Psoas muscle (tissue), 8 donors: ENCODE measurements at regions of chr18 and their contacts with region 1.

Region 1: DNA sequence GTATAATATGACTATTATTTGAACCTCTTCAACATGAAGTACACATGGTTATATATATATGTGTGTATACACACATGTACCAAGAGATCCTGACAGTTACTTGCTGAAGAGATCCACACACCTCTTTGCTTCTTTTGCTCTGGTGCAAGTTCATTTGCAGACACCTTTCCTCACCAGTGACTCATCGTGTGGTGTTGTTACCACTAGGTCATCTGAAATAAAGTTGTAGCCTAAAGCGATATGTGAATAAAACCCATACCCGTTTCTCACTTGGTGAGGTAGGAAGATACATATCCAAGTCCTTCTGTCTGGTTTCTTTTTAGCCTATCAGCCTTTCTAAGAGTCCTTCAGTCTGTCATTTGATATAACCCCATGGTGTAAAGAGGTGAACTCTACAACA is 379.5 kb upstream of the RAB12 start:
- DNase-seq: no peak
- ATAC-seq: no peak
- H3K4me3 ChIP-seq: no peak overlapping the region
- H3K27ac ChIP-seq: no peak overlapping the region
- H3K4me1 ChIP-seq: no peaks in the 10 kb centered on the region
- H3K27me3 ChIP-seq: no peaks in the 10 kb centered on the region
- CTCF ChIP-seq: no peak

Region 2: GRCh38 chr18:8097927-8098326 is 131.8 kb before region 1 on chr18:
- intact Hi-C with region 1: no loop called
- DNase-seq: no peak
- ATAC-seq: no peak
- H3K4me3 ChIP-seq: no peak overlapping the region
- H3K27ac ChIP-seq: no peak overlapping the region
- H3K4me1 ChIP-seq: no peaks in the 10 kb centered on the region
- H3K27me3 ChIP-seq: no peaks in the 10 kb centered on the region
- CTCF ChIP-seq: no peak

Region 3: GRCh38 chr18:8217051-8217564 is 12.7 kb before region 1 on chr18:
- intact Hi-C with region 1: loop called in 1 of 2 experiments (anchors 1 kb)
- DNase-seq: no peak
- ATAC-seq: no peak
- H3K4me3 ChIP-seq: no peak overlapping the region
- H3K27ac ChIP-seq: no peak overlapping the region
- H3K4me1 ChIP-seq: no peaks in the 10 kb centered on the region
- H3K27me3 ChIP-seq: no peaks in the 10 kb centered on the region
- CTCF ChIP-seq: no peak

Region 4: GRCh38 chr18:8319798-8320489 is 90.2 kb after region 1 on chr18:
- intact Hi-C with region 1: no loop called
- DNase-seq: no peak
- ATAC-seq: no peak
- H3K4me3 ChIP-seq: no peak overlapping the region
- H3K27ac ChIP-seq: no peak overlapping the region
- H3K4me1 ChIP-seq: no peaks in the 10 kb centered on the region
- H3K27me3 ChIP-seq: no peaks in the 10 kb centered on the region
- CTCF ChIP-seq: no peak